ENCODE measurements at regions of chr19 and their contacts with region 1.

Region 1: DNA sequence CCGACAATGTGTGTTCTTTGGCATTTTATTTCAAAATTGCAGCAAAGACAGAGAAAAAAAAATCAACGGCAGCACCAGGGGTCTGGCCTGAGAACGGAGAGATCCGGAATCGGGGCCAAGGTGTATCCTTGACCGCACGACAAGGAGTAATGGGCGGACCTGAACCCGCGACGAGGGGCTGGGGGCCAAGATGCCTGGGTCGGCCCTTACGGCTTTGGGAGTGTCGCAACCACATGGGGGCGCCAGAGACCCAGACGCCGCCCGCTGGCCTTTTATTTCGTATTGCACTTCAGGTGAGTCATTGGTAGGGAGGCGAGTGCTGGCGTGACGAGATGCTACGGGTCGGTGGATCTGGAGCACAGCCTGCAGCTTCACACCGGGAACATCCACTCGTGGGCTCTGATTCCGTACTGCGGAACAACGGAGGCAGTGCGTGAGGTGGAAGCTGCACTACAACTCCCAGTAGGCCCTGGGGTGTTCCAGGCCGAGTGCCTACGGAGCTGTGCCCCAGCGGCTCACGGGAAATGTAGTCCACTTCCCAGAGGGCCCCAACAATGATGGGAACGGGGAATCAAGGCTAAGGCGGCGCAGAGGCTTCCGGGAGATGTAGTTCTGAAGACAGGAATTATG is 15.7 kb downstream of the BCAT2 start:
- DNase-seq: peak; percentile 61 to 93 (median 83)
- ATAC-seq: peak; percentile 98
- H3K4me3 ChIP-seq: peak overlapping the region; percentile 71 to 78
- H3K4me3 Mint-ChIP-seq: peak overlapping the region; percentile 91
- H3K27ac ChIP-seq: peak overlapping the region; percentile 18 to 73
- H3K27ac Mint-ChIP-seq: peak overlapping the region; percentile 85
- H3K4me1 ChIP-seq: peaks cover 3% of the 10 kb centered on the region
- H3K4me1 Mint-ChIP-seq: peaks cover 6% of the 10 kb centered on the region
- H3K27me3 ChIP-seq: no peaks in the 10 kb centered on the region
- H3K27me3 Mint-ChIP-seq: no peaks in the 10 kb centered on the region
- CTCF ChIP-seq: peak; percentile 98

Region 2: DNA sequence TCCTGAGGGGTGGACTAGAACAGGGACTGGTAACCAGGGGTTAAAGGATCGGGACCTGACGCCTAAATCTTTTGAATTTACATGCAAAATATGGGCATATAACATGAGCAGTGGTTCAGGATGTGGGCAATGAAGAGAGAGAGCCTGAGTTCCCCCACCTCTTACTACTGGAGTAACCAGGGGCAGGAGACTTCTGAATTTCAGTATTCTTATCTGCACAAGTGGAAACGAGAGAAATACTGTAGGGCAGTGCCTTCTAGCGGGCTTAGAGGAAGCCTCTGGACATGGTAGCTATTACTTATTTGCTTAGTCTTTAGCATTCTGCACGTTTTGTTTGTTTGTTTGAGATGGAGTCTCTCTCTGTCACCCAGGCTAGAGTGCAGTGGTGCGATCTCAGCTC is 10.6 kb before region 1 on chr19:
- CTCF ChIA-PET with region 1: interaction called, 11 read pairs
- POLR2A ChIA-PET with region 1: interaction called, 4 read pairs
- intact Hi-C with region 1: no loop called
- DNase-seq: no peak
- ATAC-seq: no peak
- H3K4me3 ChIP-seq: no peak overlapping the region
- H3K4me3 Mint-ChIP-seq: no peak overlapping the region
- H3K27ac ChIP-seq: no peak overlapping the region
- H3K27ac Mint-ChIP-seq: no peak overlapping the region
- H3K4me1 ChIP-seq: peaks cover 3% of the 10 kb centered on the region
- H3K4me1 Mint-ChIP-seq: peaks cover 6% of the 10 kb centered on the region
- H3K27me3 ChIP-seq: no peaks in the 10 kb centered on the region
- H3K27me3 Mint-ChIP-seq: peaks cover 12% of the 10 kb centered on the region
- CTCF ChIP-seq: no peak

Region 3: GRCh38 chr19:48812094-48812929 is 17.1 kb after region 1 on chr19:
- CTCF ChIA-PET with region 1: interaction called, 15 read pairs
- POLR2A ChIA-PET with region 1: interaction called, 9 read pairs
- intact Hi-C with region 1: loop called in 1 of 2 experiments (anchors 1 kb)
- DNase-seq: peak; percentile 22 to 77 (median 64)
- ATAC-seq: peak; percentile 65
- H3K4me3 ChIP-seq: peak overlapping the region; percentile 35 to 37
- H3K4me3 Mint-ChIP-seq: peak overlapping the region; percentile 80
- H3K27ac ChIP-seq: no peak overlapping the region
- H3K27ac Mint-ChIP-seq: no peak overlapping the region
- H3K4me1 ChIP-seq: peaks cover 11% of the 10 kb centered on the region
- H3K4me1 Mint-ChIP-seq: peaks cover 26% of the 10 kb centered on the region
- H3K27me3 ChIP-seq: no peaks in the 10 kb centered on the region
- H3K27me3 Mint-ChIP-seq: no peaks in the 10 kb centered on the region
- CTCF ChIP-seq: no peak

Region 4: DNA sequence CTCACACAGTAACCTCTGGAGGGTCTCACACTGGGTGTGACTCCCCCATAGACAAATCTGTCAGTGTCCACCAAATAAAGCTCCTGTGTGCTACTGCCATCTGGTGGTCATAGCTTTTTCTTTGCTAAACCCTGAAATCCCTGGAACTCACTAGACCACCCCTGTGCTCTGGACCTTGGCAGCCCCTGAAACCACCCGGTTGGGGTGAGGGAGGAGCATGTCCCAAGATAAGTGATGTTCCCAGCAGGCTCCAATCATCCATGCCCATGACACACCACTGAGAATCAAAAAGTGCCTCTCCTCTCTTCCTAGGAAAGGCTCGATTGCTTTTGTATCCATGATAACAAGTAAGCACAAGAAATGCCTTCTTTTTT is 47.6 kb after region 1 on chr19:
- CTCF ChIA-PET with region 1: interaction called, 403 read pairs
- POLR2A ChIA-PET with region 1: interaction called, 8 read pairs
- intact Hi-C with region 1: no loop called
- DNase-seq: peak in 8 of 9 experiments; percentile 32 to 77 (median 56)
- ATAC-seq: peak; percentile 40
- H3K4me3 ChIP-seq: no peak overlapping the region
- H3K4me3 Mint-ChIP-seq: no peak overlapping the region
- H3K27ac ChIP-seq: no peak overlapping the region
- H3K27ac Mint-ChIP-seq: no peak overlapping the region
- H3K4me1 ChIP-seq: no peaks in the 10 kb centered on the region
- H3K4me1 Mint-ChIP-seq: peaks cover 3% of the 10 kb centered on the region
- H3K27me3 ChIP-seq: no peaks in the 10 kb centered on the region
- H3K27me3 Mint-ChIP-seq: no peaks in the 10 kb centered on the region
- CTCF ChIP-seq: peak; percentile 85

Region 5: DNA sequence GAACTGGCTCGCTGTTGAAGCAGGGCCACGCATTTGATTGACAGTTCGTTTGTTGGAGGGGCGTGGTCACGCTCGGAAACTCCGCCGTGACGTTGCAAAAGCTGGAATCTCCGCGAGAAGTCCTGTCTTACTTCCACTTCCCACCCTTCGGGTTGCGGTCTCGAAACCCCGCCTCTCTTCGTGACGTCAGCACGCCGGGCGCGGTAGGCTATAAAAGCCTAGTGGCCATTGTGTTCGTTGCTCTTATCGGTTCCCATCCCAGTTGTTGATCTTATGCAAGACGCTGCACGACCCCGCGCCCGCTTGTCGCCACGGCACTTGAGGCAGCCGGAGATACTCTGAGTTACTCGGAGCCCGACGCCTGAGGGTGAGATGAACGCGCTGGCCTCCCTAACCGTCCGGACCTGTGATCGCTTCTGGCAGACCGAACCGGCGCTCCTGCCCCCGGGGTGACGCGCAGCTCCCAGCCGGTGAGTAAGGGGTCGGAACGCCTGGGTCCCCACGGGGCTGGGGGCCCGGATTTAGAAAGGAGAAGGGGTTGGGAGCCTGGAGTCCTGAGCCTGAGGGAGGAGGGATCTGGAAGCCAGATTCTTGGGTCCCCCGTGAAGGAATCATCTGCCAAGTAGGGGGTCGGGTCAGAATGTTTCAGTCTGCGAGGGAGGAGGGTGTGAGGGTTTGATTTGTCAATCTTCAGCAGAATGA is 77.2 kb after region 1 on chr19 and contains the start of gene PPP1R15A:
- CTCF ChIA-PET with region 1: interaction called, 4 read pairs
- POLR2A ChIA-PET with region 1: interaction called, 3 read pairs
- intact Hi-C with region 1: loop called in 1 of 2 experiments (anchors 1 kb)
- DNase-seq: peak; percentile 95 to 99 (median 98)
- ATAC-seq: peak; percentile 41
- H3K4me3 ChIP-seq: peak within 1 kb of the TSS; percentile 88 to 90
- H3K4me3 Mint-ChIP-seq: peak within 1 kb of the TSS; percentile 97
- H3K27ac ChIP-seq: peak within 1 kb of the TSS; percentile 98 to 99
- H3K27ac Mint-ChIP-seq: peak within 1 kb of the TSS; percentile 100
- H3K4me1 ChIP-seq: peaks cover 32% of the 10 kb centered on the region
- H3K4me1 Mint-ChIP-seq: peaks cover 34% of the 10 kb centered on the region
- H3K27me3 ChIP-seq: no peaks in the 10 kb centered on the region
- H3K27me3 Mint-ChIP-seq: no peaks in the 10 kb centered on the region
- CTCF ChIP-seq: no peak
- total RNA-seq, gene PPP1R15A: 398 to 399 TPM

Region 6: GRCh38 chr19:48887861-48888612 is 92.9 kb after region 1 on chr19:
- CTCF ChIA-PET with region 1: no interaction called
- POLR2A ChIA-PET with region 1: no interaction called
- intact Hi-C with region 1: no loop called
- DNase-seq: no peak
- ATAC-seq: no peak
- H3K4me3 ChIP-seq: no peak overlapping the region
- H3K4me3 Mint-ChIP-seq: no peak overlapping the region
- H3K27ac ChIP-seq: no peak overlapping the region
- H3K27ac Mint-ChIP-seq: no peak overlapping the region
- H3K4me1 ChIP-seq: no peaks in the 10 kb centered on the region
- H3K4me1 Mint-ChIP-seq: no peaks in the 10 kb centered on the region
- H3K27me3 ChIP-seq: peaks cover 0 to 2% of the 10 kb centered on the region in 2 experiments
- H3K27me3 Mint-ChIP-seq: peaks cover 15% of the 10 kb centered on the region
- CTCF ChIP-seq: no peak

Region 7: GRCh38 chr19:48965040-48965805 is 170.1 kb after region 1 on chr19 and contains the start of gene FTL:
- CTCF ChIA-PET with region 1: interaction called, 28 read pairs
- POLR2A ChIA-PET with region 1: interaction called, 3 read pairs
- intact Hi-C with region 1: loop called in 1 of 2 experiments (anchors 1 kb)
- DNase-seq: peak; percentile 71 to 96 (median 88)
- ATAC-seq: peak; percentile 73
- H3K4me3 ChIP-seq: peak within 1 kb of the TSS; percentile 83 to 98
- H3K4me3 Mint-ChIP-seq: peak within 1 kb of the TSS; percentile 99
- H3K27ac ChIP-seq: peak within 1 kb of the TSS; percentile 84 to 90
- H3K27ac Mint-ChIP-seq: peak within 1 kb of the TSS; percentile 99
- H3K4me1 ChIP-seq: peaks cover 49% of the 10 kb centered on the region
- H3K4me1 Mint-ChIP-seq: peaks cover 60% of the 10 kb centered on the region
- H3K27me3 ChIP-seq: no peaks in the 10 kb centered on the region
- H3K27me3 Mint-ChIP-seq: no peaks in the 10 kb centered on the region
- CTCF ChIP-seq: no peak
- total RNA-seq, gene FTL: 665 to 668 TPM

Measured in CD8-positive, alpha-beta T cell (primary cell).